ENCODE measurements at regions of chr5 and their contacts with region 1.

Region 1: GRCh38 chr5:139022528-139022927 is 147.4 kb upstream of the LRRTM2 start:
- DNase-seq: peak; percentile 65 to 85
- ATAC-seq: peak; percentile 31
- H3K4me3 ChIP-seq: no peak overlapping the region
- H3K27ac ChIP-seq: peak overlapping the region; percentile 88 to 93
- H3K4me1 ChIP-seq: peaks cover 0 to 6% of the 10 kb centered on the region in 2 donors
- H3K27me3 ChIP-seq: no peaks in the 10 kb centered on the region

Region 2: DNA sequence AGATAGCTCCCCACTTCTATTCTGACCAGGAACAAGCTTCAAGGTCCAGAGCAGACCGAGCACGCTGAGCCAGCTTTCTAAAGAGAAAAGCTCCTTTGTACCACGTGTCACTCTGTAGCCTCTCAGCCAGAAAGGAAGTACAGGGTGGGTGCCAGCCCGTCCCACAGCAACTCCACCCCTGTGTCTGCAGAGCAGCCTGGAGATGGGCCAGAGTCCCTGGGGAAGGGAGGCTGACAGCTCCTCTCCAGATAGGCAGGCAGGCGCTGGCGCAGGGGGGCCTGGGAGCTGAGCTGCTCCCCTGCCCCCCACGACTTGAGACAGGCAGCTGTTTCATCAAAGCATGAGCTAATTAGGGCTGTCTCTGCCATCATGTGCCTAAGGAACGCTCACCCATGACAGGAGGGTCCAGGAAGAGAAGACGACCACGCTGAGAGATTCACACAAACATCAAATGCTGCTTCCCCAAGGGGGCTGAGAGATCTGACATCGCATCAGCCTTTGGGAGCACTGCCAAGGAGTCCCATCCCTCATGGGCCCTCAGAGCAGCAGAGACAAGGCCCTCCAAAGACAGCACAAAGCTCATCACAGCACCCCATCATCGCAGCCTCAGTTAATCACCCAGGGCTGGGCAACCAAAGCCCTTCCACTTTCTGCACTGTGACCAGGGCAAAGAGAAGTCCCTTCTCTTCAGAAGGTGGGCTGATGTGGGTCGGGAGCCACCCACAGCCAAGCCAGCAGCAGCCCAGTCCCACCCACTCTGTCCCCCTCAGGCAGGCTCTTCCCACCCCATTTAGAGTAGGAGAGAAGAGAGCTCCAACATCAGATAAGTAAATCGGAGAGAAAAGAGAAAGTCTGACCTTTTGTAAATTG is 68.9 kb before region 1 on chr5:
- intact Hi-C with region 1: loop called in 1 of 2 experiments (anchors 5 kb)
- DNase-seq: peak; percentile 88 to 91
- ATAC-seq: peak; percentile 74
- H3K4me3 ChIP-seq: no peak overlapping the region
- H3K27ac ChIP-seq: peak overlapping the region in 1 of 2 donors; percentile 72
- H3K4me1 ChIP-seq: peaks cover 0 to 4% of the 10 kb centered on the region in 2 donors
- H3K27me3 ChIP-seq: no peaks in the 10 kb centered on the region

Region 3: DNA sequence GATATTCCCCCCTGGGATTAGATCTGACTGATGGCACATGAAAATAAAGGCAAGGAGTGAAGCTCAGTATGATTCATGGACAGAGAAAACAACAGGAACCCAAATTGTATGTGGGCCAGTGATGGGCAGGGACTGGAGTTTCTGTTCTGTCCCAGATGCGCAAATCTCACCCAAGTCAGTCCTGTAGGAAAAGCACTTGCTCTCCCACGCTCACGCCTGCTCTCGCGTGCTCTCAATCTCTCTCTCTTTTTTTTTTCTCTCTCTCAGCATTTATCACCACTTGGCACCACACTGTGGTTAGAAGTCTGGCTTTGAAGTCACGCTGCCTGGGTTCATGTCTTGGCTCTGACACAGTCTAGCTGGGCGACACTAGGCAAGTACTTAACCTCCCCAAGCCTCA is 40.9 kb before region 1 on chr5:
- intact Hi-C with region 1: loop called in 1 of 2 experiments (anchors 5 kb)
- DNase-seq: no peak
- ATAC-seq: peak; percentile 34
- H3K4me3 ChIP-seq: no peak overlapping the region
- H3K27ac ChIP-seq: peak overlapping the region in 1 of 2 donors; percentile 63
- H3K4me1 ChIP-seq: peaks cover 10 to 12% of the 10 kb centered on the region in 2 donors
- H3K27me3 ChIP-seq: no peaks in the 10 kb centered on the region